ENCODE measurements at regions of chr1 and their contacts with region 1.

Region 1: GRCh38 chr1:216723274-216723780 is at the start of gene ESRRG:
- DNase-seq: no peak
- H3K4me3 ChIP-seq: peak within 1 kb of the TSS; percentile 54 to 65 (median 58)
- H3K27ac ChIP-seq: peak within 1 kb of the TSS; percentile 46 to 66 (median 50)
- H3K4me1 ChIP-seq: peaks cover 5 to 22% (median 10%) of the 10 kb centered on the region in 4 donors
- H3K27me3 ChIP-seq: no peaks in the 10 kb centered on the region
- CTCF ChIP-seq: no peak
- EP300 ChIP-seq: no peak
- POLR2A ChIP-seq: no peak
- total RNA-seq, gene ESRRG: 3.4 to 7.8 (median 5.7) TPM

Region 2: DNA sequence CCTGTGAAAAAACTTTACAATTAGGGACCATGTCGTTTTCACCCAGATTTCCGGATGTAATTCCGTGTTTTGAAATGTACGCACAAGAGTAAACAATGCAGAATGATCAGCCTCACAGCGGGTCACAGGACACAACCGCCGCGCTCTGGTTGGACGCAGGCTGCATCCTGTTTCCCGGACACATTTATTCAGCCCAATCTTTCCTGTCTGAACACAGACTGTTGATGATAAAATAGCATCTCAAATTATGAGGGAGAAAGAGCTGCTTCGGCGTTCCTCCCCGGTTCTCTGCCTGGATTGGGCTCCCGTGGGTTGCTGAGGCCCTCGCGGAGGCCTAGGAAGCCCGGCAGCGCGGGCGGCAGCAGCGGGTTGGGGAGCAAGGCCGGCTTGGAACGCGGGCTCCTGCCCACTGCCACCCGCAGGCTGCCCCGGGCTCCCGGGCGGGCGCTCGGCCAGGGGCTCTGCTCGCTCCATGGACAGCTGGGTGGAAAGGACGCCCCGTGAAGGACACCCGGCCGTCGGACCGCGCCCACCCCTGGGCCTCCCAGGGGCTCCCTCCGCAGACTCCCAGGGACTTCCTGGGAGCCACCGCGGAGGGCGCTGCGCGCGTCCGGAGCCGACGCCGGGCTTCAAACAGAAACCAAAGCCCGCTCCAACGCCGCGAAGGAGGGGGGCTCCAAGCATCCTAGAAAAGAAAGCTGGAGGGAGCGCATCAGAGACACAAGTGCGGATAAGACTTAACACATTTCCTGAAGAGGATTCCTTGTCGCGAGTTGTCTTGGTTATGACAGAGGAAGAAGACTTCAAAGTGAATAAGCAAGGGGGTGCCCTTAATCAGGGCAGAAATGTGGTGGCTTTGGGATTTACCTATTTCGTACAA is 122.4 kb before region 1 on chr1:
- intact Hi-C with region 1: loop called (anchors 10 kb)
- DNase-seq: peak; percentile 94
- H3K4me3 ChIP-seq: peak overlapping the region; percentile 76 to 88 (median 79)
- H3K27ac ChIP-seq: peak overlapping the region; percentile 95 to 97 (median 96)
- H3K4me1 ChIP-seq: peaks cover 5 to 12% (median 11%) of the 10 kb centered on the region in 4 donors
- H3K27me3 ChIP-seq: no peaks in the 10 kb centered on the region
- CTCF ChIP-seq: peak; percentile 45 to 77 (median 47)
- EP300 ChIP-seq: no peak
- POLR2A ChIP-seq: no peak

Region 3: DNA sequence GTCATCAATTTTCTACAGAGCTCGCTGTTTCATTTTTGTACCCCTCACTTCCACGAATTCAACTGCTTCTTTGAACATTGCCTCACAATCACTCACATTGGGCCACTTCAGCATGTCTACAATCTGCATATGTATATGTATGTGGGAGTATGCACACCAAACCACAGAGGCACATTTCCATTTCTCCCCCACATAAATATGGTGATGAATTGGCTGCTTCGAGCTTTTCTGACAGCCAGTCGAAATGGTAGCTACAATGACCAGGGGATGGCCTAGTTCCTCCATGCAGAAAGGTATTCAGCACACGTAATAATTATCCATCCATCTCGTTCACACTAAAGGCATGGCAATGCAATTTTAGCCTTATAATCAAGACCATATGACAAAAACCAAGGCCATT is 229.5 kb after region 1 on chr1:
- intact Hi-C with region 1: no loop called
- DNase-seq: no peak
- H3K4me3 ChIP-seq: no peak overlapping the region
- H3K27ac ChIP-seq: no peak overlapping the region
- H3K4me1 ChIP-seq: no peaks in the 10 kb centered on the region
- H3K27me3 ChIP-seq: no peaks in the 10 kb centered on the region
- CTCF ChIP-seq: no peak
- EP300 ChIP-seq: no peak
- POLR2A ChIP-seq: no peak

Measured in esophagus muscularis mucosa (tissue), 4 donors.